PC-9 (cell line): ENCODE measurements at regions of chr1 and their contacts with region 1.

Region 1: DNA sequence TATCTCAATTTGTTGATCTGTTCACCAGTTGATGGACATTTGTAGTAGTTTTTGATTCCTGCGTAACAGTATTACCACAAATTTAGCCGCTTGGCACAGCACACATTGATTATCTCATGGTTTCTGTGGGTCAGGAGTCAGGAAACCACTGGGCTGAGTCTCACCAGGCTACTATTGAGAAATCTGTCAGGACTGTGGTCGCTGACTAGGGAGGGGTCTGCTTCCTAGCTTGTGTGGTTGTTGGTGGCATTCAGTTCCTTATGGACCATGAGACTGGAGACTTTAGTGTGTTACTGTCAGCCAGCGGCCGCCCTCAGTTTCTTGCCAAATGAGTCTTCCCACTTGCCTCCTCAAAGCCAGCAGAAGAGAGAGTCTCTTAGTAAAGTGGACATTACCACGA is 9.8 kb downstream of the PEX14 start:
- DNase-seq: no peak
- H3K4me3 ChIP-seq: no peak overlapping the region
- H3K27ac ChIP-seq: no peak overlapping the region
- H3K4me1 ChIP-seq: no peaks in the 10 kb centered on the region
- H3K27me3 ChIP-seq: no peaks in the 10 kb centered on the region
- CTCF ChIP-seq: no peak

Region 2: GRCh38 chr1:10324627-10325026 is 159.9 kb before region 1 on chr1:
- CTCF ChIA-PET with region 1: no interaction called
- POLR2A ChIA-PET with region 1: no interaction called
- intact Hi-C with region 1: no loop called
- DNase-seq: no peak
- H3K4me3 ChIP-seq: no peak overlapping the region
- H3K27ac ChIP-seq: no peak overlapping the region
- H3K4me1 ChIP-seq: no peaks in the 10 kb centered on the region; the same call in 1 of the 2 replicates
- H3K27me3 ChIP-seq: no peaks in the 10 kb centered on the region
- CTCF ChIP-seq: no peak

Region 3: DNA sequence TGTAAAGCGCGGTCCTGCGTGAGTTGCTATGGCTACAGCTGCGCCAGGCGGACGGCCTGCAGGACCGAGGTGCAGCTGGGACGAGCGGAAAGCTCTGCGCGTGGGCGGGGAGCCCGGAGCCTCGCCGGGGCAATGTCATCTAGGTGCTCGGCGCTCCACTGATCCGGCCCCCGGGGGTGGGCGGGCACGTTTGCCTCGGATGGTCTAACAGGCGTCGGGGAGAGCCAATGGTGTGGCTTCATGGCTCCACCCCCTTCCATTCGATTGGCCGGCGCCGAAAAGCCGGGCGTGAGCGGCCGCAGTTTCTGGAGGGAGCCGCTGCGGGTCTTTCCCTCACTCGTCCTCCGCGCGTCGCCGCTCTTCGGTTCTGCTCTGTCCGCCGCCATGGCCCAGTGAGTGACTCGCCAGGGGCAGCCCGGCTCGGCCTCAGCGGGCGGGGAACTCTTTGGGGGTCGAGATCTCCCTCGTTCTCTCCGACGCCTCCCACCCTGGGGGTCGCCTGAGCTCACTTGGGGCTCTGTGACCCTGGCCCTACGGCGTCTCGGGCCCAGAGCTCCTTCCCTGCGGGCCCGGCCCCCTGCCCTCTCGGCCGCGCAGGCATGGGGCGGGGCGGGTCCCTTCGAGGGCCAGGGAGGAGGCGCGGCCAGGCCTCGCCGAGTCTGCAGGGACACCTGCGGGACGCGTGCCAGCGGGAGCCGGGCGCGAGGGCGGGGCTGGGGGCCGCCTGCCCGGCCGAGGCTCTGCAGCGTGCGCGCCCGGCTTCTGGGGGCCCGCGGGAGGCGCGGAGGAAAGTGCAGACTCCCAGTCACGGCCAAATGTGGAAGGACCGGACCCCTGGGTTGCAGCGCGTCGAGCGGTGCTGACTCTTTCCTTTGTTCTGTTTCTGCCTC is 85.5 kb before region 1 on chr1 and contains the start of gene PGD:
- CTCF ChIA-PET with region 1: no interaction called
- POLR2A ChIA-PET with region 1: no interaction called
- intact Hi-C with region 1: no loop called
- DNase-seq: peak; percentile 88 to 98
- H3K4me3 ChIP-seq: peak within 1 kb of the TSS; percentile 94
- H3K27ac ChIP-seq: peak within 1 kb of the TSS; percentile 89
- H3K4me1 ChIP-seq: peaks cover 25% of the 10 kb centered on the region
- H3K27me3 ChIP-seq: no peaks in the 10 kb centered on the region
- CTCF ChIP-seq: no peak
- total RNA-seq, gene PGD: 526 and 559 TPM in 2 replicates

Region 4: DNA sequence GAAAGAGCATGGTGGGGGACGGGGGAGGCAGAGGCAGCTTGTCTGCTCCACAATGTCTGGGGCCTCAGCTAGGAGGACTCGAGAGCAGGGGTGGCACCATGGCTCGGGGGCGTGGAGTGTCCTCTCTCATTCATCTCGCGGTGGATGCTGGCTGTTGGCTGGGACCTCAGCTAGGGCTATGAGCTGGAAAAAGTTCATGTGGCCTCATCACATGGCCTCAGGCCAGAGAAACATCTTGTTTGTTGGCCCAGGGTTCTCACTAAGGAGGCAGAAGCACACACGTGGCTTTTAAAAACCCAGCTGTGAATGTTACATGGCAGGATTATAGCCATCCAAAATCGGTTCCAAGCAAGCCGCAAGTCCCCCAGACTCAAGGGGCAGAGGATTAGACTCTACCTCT is 60.5 kb before region 1 on chr1:
- CTCF ChIA-PET with region 1: no interaction called
- POLR2A ChIA-PET with region 1: interaction called, 30 read pairs
- intact Hi-C with region 1: no loop called
- DNase-seq: no peak
- H3K4me3 ChIP-seq: no peak overlapping the region
- H3K27ac ChIP-seq: no peak overlapping the region
- H3K4me1 ChIP-seq: peaks cover 3% of the 10 kb centered on the region; the same call in 1 of the 2 replicates
- H3K27me3 ChIP-seq: no peaks in the 10 kb centered on the region
- CTCF ChIP-seq: no peak